ENCODE measurements at regions of chr5 and their contacts with region 1.

Region 1: GRCh38 chr5:141878711-141879425 is 658 bp upstream of the PCDH1 start:
- DNase-seq: peak; percentile 92
- H3K4me3 ChIP-seq: peak overlapping the region; percentile 37 to 58 (median 52)
- H3K27ac ChIP-seq: no peak overlapping the region
- H3K4me1 ChIP-seq: peaks cover 22% of the 10 kb centered on the region
- H3K27me3 ChIP-seq: peaks cover 26 to 33% of the 10 kb centered on the region in 2 experiments
- CTCF ChIP-seq: peak; percentile 91 to 94
- POLR2A ChIP-seq: no peak

Region 2: GRCh38 chr5:141701360-141702119 is 177.3 kb before region 1 on chr5:
- CTCF ChIA-PET with region 1: interaction called, 233 read pairs
- POLR2A ChIA-PET with region 1: no interaction called
- dilution Hi-C with region 1: no loop called
- intact Hi-C with region 1: loop called (anchors 1 kb)
- DNase-seq: no peak
- H3K4me3 ChIP-seq: no peak overlapping the region
- H3K27ac ChIP-seq: no peak overlapping the region
- H3K4me1 ChIP-seq: peaks cover 5% of the 10 kb centered on the region
- H3K27me3 ChIP-seq: peaks cover 19 to 33% of the 10 kb centered on the region in 2 experiments
- CTCF ChIP-seq: no peak
- POLR2A ChIP-seq: no peak

Region 3: DNA sequence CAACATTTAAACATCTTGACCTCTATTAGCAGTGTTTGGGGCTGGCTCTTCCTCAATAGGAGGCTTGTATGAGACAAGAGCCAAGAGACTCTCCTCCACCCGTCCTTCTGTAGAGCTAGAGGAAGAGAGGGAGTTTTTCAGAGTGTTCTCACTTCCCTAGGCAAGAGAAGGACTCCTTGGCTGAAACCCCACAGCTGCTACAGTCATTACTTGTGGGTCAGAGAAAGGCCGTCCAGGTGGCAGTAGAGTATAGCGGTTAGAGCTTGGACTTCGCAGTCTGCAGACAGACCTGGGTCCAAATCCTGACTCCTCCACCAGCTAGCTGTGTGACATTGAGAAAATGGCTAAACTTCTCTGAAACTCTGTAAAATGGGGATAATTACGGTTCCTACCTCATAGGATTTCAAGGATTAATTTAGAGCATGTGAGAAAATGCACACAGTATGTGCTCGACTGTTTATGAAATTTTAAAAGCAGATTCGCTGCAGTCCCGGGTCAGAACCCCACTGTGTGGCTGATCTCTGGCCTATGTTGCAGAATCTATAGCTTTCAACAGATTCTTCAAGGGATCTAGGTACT is 116.0 kb before region 1 on chr5:
- CTCF ChIA-PET with region 1: interaction called, 217 read pairs
- POLR2A ChIA-PET with region 1: interaction called, 5 read pairs
- dilution Hi-C with region 1: no loop called
- intact Hi-C with region 1: no loop called
- DNase-seq: no peak
- H3K4me3 ChIP-seq: no peak overlapping the region
- H3K27ac ChIP-seq: no peak overlapping the region
- H3K4me1 ChIP-seq: no peaks in the 10 kb centered on the region
- H3K27me3 ChIP-seq: peaks cover 11 to 23% of the 10 kb centered on the region in 2 experiments
- CTCF ChIP-seq: no peak
- POLR2A ChIP-seq: no peak

Region 4: GRCh38 chr5:141825791-141826560 is 52.9 kb before region 1 on chr5:
- CTCF ChIA-PET with region 1: interaction called, 21 read pairs
- POLR2A ChIA-PET with region 1: interaction called, 7 read pairs
- dilution Hi-C with region 1: no loop called
- intact Hi-C with region 1: no loop called
- DNase-seq: no peak
- H3K4me3 ChIP-seq: no peak overlapping the region
- H3K27ac ChIP-seq: no peak overlapping the region
- H3K4me1 ChIP-seq: peaks cover 14% of the 10 kb centered on the region
- H3K27me3 ChIP-seq: no peaks in the 10 kb centered on the region
- CTCF ChIP-seq: peak; percentile 15 to 25
- POLR2A ChIP-seq: no peak

Region 5: DNA sequence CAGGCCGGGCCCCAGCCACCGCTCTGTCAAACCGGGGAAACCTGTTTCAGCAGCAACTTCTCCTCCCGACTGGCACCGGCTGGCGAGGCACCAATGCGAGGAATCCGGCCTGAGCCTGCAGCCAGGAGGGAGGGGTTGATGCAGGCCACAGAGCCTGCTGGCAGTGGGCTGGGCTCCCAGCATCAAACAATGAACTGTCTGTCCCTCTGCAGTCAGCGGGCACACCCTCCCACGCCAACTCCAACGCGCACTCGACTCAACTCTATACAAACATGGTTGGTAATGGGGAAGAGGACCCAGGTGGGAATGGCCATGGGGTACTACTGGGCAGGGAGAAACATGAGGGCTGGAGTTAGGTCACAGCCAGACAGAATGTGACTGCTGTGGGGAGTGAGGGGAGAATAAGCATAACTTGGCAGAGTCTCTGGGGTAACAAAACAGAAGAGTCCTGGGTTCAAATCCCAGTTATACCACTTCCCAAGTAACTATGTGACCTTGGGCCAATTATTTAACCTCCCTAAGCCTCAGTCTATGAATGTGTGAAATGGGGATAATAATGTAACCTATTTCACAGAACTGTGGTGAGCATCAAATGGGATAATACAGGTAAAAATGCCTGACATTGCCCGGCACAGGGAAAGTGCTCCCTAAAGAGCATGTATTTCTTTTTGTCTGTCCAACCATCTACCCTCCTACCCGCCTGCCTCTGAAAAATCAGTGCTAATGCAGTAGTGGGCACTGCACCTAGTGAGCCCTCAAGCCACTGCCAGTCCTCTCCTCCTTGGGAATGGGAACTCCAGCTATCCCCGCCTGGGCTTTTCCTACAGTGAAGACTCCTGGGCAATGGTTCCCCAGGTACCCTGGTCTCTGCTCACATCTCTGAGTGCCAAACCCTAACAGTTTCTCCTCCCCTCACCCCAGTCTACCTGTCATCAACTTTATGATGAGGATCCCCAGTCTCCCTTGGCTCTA is 12.4 kb before region 1 on chr5:
- CTCF ChIA-PET with region 1: interaction called, 13 read pairs
- POLR2A ChIA-PET with region 1: no interaction called
- dilution Hi-C with region 1: no loop called
- intact Hi-C with region 1: no loop called
- DNase-seq: no peak
- H3K4me3 ChIP-seq: no peak overlapping the region
- H3K27ac ChIP-seq: no peak overlapping the region
- H3K4me1 ChIP-seq: peaks cover 10% of the 10 kb centered on the region
- H3K27me3 ChIP-seq: no peaks in the 10 kb centered on the region
- CTCF ChIP-seq: no peak
- POLR2A ChIP-seq: no peak

Region 6: GRCh38 chr5:141960449-141961202 is 81.8 kb after region 1 on chr5:
- CTCF ChIA-PET with region 1: interaction called, 165 read pairs
- POLR2A ChIA-PET with region 1: no interaction called
- dilution Hi-C with region 1: no loop called
- intact Hi-C with region 1: loop called (anchors 1 kb)
- DNase-seq: peak; percentile 88
- H3K4me3 ChIP-seq: no peak overlapping the region
- H3K27ac ChIP-seq: no peak overlapping the region
- H3K4me1 ChIP-seq: peaks cover 31% of the 10 kb centered on the region
- H3K27me3 ChIP-seq: no peaks in the 10 kb centered on the region
- CTCF ChIP-seq: peak; percentile 80 to 86
- POLR2A ChIP-seq: no peak